Panc1 (cell line): ENCODE measurements at regions of chr5 and their contacts with region 1.

Region 1: GRCh38 chr5:57298295-57298984 is 124.6 kb downstream of the GPBP1 start:
- DNase-seq: peak; percentile 77
- ATAC-seq: peak; percentile 93
- H3K4me3 ChIP-seq: no peak overlapping the region
- H3K27ac ChIP-seq: peak overlapping the region; percentile 89
- H3K4me1 ChIP-seq: peaks cover 5% of the 10 kb centered on the region
- H3K27me3 ChIP-seq: no peaks in the 10 kb centered on the region
- CTCF ChIP-seq: peak; percentile 86

Region 2: DNA sequence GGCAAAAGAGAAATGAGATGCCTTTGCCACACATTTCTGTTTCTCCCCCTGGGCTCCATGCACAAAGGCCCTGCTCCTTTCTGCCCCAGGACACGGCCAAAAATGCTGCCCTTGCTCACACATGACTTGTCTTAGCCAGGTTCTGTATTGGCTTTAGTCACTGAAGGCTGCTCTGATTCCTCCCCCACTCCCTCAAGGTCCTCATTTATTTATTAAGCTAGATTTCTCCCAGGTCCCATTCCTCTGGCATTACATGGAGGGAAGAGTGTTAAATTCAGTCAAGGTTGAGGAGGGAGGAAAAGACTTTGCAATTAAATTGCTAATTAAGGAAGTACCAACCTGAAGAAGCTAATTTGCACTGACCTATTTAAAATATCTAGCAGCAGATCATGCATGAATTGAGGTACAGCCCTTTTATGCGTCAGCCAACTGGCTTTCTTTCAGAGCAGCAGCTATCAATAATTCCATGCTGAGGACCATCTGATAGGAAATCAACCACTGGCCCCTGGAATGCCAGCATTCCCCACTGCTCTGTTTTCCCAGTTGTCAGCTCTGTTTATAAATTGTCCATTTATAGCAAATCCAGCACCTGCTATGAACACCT is 564.2 kb before region 1 on chr5:
- CTCF ChIA-PET with region 1: no interaction called
- POLR2A ChIA-PET with region 1: no interaction called
- in situ Hi-C with region 1: no loop called
- intact Hi-C with region 1: no loop called
- DNase-seq: no peak
- ATAC-seq: no peak
- H3K4me3 ChIP-seq: no peak overlapping the region
- H3K27ac ChIP-seq: no peak overlapping the region
- H3K4me1 ChIP-seq: no peaks in the 10 kb centered on the region
- H3K27me3 ChIP-seq: no peaks in the 10 kb centered on the region
- CTCF ChIP-seq: no peak

Region 3: DNA sequence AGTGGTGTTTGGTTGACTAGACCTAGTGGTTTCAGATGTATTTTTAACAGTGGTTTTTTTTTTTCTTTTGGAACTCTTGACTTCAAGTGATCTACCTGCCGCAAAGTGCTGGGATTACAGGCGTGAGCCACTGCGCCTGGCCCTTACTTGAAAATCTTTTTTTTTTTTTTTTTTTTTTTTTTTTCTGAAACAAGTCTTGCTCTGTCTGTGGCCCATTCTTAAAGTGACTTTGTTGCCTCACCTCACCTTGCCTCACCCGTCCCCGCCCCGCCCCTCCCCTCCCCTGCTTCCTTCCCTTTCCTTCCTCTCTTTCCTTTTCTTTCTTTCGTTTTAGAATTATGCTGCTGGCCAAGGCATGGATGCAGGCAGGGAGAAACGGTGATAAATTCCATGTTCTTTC is 98.6 kb before region 1 on chr5:
- CTCF ChIA-PET with region 1: no interaction called
- POLR2A ChIA-PET with region 1: no interaction called
- in situ Hi-C with region 1: no loop called
- intact Hi-C with region 1: no loop called
- DNase-seq: no peak
- ATAC-seq: no peak
- H3K4me3 ChIP-seq: no peak overlapping the region
- H3K27ac ChIP-seq: no peak overlapping the region
- H3K4me1 ChIP-seq: no peaks in the 10 kb centered on the region
- H3K27me3 ChIP-seq: no peaks in the 10 kb centered on the region
- CTCF ChIP-seq: no peak

Region 4: GRCh38 chr5:57327561-57328394 is 29.3 kb after region 1 on chr5:
- CTCF ChIA-PET with region 1: no interaction called
- POLR2A ChIA-PET with region 1: no interaction called
- in situ Hi-C with region 1: no loop called
- intact Hi-C with region 1: no loop called
- DNase-seq: no peak
- ATAC-seq: peak; percentile 62
- H3K4me3 ChIP-seq: no peak overlapping the region
- H3K27ac ChIP-seq: peak overlapping the region; percentile 40; the same call in 1 of the 2 replicates
- H3K4me1 ChIP-seq: no peaks in the 10 kb centered on the region
- H3K27me3 ChIP-seq: no peaks in the 10 kb centered on the region
- CTCF ChIP-seq: no peak

Region 5: DNA sequence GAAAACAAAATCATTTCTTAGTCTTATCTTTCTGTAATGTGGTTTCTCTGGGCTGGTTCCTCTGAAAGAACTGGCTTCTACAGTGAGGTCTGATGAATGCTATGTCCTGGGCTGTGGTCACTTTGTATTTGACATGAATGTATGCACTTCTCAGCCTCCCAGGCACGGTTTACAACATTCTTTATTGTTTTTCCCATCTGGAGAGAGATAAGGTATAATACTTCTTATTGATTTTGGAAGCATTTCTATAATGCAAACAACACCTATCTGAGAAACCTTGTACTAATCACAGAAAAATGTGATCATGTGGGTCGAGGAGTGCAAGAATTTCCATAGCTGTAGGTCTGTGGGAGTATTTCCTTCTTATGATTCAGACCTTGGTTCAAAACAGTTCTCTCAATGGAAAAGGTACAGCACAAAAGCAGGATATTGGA is 137.3 kb after region 1 on chr5:
- CTCF ChIA-PET with region 1: no interaction called
- POLR2A ChIA-PET with region 1: no interaction called
- in situ Hi-C with region 1: no loop called
- intact Hi-C with region 1: loop called (anchors 5 kb)
- DNase-seq: peak; percentile 73
- ATAC-seq: peak; percentile 96
- H3K4me3 ChIP-seq: no peak overlapping the region
- H3K27ac ChIP-seq: peak overlapping the region; percentile 83
- H3K4me1 ChIP-seq: peaks cover 11% of the 10 kb centered on the region; the same call in 1 of the 2 replicates
- H3K27me3 ChIP-seq: no peaks in the 10 kb centered on the region
- CTCF ChIP-seq: no peak

Region 6: DNA sequence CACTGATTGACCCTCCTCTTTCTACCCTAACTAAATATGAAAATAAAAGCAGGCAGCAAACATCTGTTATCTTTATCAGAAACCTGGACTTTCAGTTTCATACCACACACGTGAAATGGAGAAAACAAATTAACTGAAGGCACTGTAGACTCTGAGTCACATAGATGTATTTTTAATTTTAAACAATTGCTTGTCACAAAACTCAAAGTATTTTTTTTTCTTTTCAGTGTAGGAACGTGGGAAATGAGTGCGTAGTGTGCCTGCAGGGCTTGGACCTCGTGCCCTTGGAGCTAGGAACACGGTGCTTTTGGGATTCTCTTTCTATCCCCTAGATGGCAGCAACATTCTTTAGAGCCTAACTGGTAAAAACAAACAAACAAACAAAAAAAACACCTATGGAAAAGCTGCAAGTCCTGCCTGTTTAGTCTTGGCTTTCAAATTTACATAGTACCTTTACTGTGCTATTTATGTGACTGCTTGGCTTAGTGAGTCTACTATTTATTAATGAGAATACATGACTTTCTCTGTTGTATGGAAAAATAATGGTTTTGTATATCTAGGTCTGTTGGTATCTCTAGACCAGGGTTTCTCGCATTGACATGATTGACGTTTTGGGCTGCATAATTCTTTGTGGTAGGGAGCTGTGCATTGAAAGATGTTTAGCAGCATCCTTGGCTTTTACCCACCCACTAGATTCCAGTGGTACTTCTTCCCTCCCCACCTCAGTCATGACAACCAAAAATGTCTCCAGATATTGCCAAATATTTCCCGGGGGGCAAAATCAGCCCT is 201.0 kb after region 1 on chr5:
- CTCF ChIA-PET with region 1: interaction called, 6 read pairs
- POLR2A ChIA-PET with region 1: no interaction called
- in situ Hi-C with region 1: no loop called
- intact Hi-C with region 1: loop called (anchors 2 kb)
- DNase-seq: no peak
- ATAC-seq: peak; percentile 84
- H3K4me3 ChIP-seq: peak overlapping the region in 1 of 2 experiments; percentile 10; a peak in 1 of 4 replicates
- H3K27ac ChIP-seq: peak overlapping the region; percentile 94
- H3K4me1 ChIP-seq: peaks cover 21% of the 10 kb centered on the region
- H3K27me3 ChIP-seq: no peaks in the 10 kb centered on the region
- CTCF ChIP-seq: peak; percentile 88

Region 7: DNA sequence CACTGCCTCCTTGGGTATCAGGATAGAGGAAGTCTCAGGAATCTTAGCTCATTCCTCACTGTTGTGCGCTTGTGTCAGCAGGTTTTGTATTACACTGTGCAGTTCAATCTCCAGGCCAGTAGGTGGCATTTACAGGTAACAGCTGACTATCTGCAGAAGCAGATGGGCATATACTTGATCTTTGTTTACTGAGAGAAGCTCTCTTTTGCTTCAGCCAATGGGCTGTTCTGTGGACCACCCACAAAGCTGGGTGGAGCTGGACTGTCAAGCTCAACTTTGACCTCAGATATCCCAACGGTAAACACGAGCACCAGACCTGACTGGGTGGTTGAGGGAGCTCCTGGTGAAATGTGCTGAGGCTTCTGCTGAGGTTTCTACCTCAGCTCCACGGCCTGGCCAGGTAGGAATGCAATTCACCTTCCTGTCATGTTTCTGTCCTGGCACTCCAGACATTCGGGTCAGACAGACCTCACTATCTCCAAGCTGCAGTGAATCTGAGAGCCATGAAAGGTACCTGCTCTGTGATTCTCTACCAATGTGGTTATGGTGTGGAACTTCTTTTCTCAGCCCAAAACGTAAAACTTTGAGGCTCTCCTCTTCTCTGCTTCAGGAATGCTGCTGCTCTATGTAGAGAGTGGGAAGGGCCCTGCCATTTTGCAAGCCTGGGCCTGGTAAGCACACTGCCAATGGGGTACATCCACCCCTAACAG is 352.1 kb after region 1 on chr5:
- CTCF ChIA-PET with region 1: interaction called, 4 read pairs
- POLR2A ChIA-PET with region 1: interaction called, 10 read pairs
- in situ Hi-C with region 1: no loop called
- intact Hi-C with region 1: no loop called
- DNase-seq: peak; percentile 42
- ATAC-seq: no peak
- H3K4me3 ChIP-seq: no peak overlapping the region
- H3K27ac ChIP-seq: no peak overlapping the region; the same call in 1 of the 2 replicates
- H3K4me1 ChIP-seq: no peaks in the 10 kb centered on the region
- H3K27me3 ChIP-seq: no peaks in the 10 kb centered on the region
- CTCF ChIP-seq: peak; percentile 71

Region 8: DNA sequence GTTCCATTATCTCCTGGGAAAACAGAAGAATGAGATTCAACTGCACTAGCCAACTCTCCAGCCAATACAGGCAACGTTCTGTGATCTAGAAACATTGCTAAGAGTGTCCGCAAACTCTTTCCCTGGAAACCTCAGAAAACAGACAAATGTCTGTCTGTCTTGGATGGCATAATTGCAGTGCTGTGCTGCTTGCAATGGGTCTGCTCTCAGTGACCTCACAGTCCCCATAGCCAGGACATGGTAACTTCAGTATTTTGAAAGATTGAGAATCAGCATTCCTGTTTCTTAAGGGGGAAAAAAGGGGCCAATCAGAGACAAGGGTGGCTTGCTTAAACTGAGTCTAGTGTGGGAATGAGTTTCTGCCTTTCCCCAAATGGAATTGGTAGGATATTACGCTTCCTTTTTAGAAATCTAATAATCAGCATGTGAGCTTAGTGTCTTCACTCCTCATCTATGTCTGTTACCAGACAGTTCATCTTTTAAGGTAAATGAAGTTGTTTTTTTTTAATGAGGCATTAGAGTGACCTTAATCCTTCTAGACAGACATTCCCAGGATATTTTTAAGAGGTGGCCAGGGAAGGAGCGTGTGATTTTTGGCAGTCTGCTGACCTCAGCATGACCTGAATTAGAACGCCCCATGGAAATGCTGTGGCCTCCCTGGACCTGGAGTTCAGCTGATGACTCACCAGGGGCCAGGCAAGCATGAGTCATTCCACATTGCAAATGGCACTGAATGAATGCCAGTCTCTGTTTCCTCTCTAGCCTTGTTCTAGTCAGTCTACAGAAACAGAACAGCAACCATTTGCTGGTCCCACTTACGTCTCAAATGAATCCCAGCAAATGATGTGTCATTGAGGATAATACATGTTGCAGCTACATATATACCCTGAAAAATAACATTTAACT is 394.4 kb after region 1 on chr5:
- CTCF ChIA-PET with region 1: no interaction called
- POLR2A ChIA-PET with region 1: no interaction called
- in situ Hi-C with region 1: no loop called
- intact Hi-C with region 1: loop called (anchors 5 kb)
- DNase-seq: peak; percentile 95
- ATAC-seq: peak; percentile 99
- H3K4me3 ChIP-seq: peak overlapping the region; percentile 32 to 50
- H3K27ac ChIP-seq: peak overlapping the region; percentile 100
- H3K4me1 ChIP-seq: peaks cover 43% of the 10 kb centered on the region
- H3K27me3 ChIP-seq: no peaks in the 10 kb centered on the region
- CTCF ChIP-seq: no peak

Region 9: DNA sequence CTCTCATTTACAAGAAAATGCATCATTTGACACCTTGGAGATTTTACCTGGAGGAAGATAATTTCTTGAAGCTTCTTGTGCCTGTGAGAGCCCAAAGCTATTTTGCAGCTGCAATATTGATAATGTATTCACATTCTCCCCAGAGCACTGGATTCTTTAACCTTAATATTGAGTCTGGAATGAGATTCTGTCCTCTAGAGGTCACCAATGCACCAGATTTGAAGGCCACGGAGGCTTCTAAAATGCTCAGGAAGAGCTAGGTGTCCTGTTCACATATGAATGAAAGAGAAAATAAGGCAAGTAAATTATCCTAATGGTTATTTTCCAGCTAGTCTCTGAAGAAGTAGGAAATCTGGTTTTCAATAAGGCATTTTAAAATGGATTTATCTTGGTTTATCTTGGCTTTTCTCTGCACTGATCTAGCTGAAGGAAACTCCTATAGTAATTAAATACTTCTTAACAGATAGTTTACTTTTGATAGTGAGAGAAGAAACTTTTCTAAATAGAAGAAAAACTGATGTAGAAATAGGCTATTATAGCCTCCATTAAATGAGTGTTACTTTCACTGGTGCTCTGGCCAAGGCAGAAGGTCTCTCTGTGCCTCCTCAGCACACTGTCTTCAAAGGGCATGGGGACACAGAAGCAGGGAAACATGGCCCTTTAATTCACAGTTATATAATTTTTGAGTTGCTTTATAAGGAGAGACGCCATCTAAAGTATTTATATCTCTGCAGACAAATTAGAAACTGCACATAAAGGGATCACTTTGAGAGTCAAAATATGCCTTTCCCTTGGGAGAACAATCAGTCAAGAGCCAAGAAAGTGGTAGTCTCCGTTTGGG is 481.2 kb after region 1 on chr5:
- CTCF ChIA-PET with region 1: interaction called, 3 read pairs
- POLR2A ChIA-PET with region 1: no interaction called
- in situ Hi-C with region 1: no loop called
- intact Hi-C with region 1: loop called (anchors 2 kb)
- DNase-seq: peak; percentile 61
- ATAC-seq: peak; percentile 89
- H3K4me3 ChIP-seq: no peak overlapping the region
- H3K27ac ChIP-seq: peak overlapping the region; percentile 89
- H3K4me1 ChIP-seq: peaks cover 28% of the 10 kb centered on the region
- H3K27me3 ChIP-seq: no peaks in the 10 kb centered on the region
- CTCF ChIP-seq: peak; percentile 71

Region 10: GRCh38 chr5:57887851-57888621 is 589.6 kb after region 1 on chr5:
- CTCF ChIA-PET with region 1: interaction called, 3 read pairs
- POLR2A ChIA-PET with region 1: no interaction called
- in situ Hi-C with region 1: no loop called
- intact Hi-C with region 1: loop called (anchors 10 kb)
- DNase-seq: peak; percentile 27
- ATAC-seq: peak; percentile 89
- H3K4me3 ChIP-seq: no peak overlapping the region
- H3K27ac ChIP-seq: peak overlapping the region; percentile 95
- H3K4me1 ChIP-seq: peaks cover 31% of the 10 kb centered on the region
- H3K27me3 ChIP-seq: no peaks in the 10 kb centered on the region
- CTCF ChIP-seq: peak; percentile 90